Cardiac septum (tissue), 1 donor: ENCODE measurements at regions of chr16 and their contacts with region 1.

Region 1: DNA sequence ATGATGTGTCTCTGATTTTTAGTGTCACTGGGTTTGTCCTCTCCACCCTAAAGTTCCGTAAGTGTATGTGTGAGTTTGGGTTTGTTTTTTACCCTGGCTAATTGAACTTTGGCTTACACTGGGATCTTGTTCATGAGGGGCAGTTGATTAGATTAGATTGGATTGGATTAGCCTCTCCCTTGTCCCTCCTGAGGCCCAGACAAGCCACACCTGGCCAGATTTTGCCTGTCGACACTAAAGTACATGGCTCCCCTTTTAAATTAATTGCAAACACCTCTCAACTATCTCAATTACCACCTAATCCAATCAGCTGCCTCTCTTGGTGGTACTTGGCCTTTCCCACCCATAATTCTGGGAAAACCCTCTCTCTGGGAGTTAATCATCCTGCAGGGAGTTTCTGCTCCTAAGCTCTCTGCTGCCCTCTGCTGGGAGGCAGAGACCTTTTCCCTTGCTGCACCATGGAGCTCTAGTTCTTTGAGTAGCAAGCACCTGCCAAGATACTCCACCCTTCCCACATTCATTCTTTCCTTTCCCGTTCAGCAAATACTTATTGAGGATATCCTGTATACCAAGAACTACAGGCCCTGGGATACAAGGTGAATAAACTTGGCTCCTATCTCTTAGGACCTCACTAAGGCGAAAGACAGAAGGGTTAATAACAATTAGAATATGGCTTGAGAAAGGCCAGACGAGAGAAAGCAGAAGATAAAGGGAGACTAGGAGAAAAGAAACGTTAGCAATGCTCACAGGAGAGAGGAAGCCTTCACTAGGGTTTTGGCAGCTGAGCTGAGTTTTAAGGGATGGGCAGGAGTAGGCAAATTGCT is 60.0 kb upstream of the MPHOSPH6 start:
- DNase-seq: no peak

Region 2: GRCh38 chr16:81891736-81892357 is 338.2 kb before region 1 on chr16:
- intact Hi-C with region 1: loop called (anchors 5 kb)
- DNase-seq: no peak

Region 3: GRCh38 chr16:81940781-81941560 is 289.0 kb before region 1 on chr16:
- intact Hi-C with region 1: loop called (anchors 5 kb)
- DNase-seq: no peak